ENCODE measurements at regions of chr2 and their contacts with region 1.

Region 1: GRCh38 chr2:64165706-64166105 is 21.5 kb upstream of the PELI1 start:
- DNase-seq: no peak
- H3K4me3 Mint-ChIP-seq: no peak overlapping the region
- H3K27ac Mint-ChIP-seq: no peak overlapping the region
- H3K4me1 Mint-ChIP-seq: peaks cover 3% of the 10 kb centered on the region
- H3K27me3 Mint-ChIP-seq: no peaks in the 10 kb centered on the region

Region 2: DNA sequence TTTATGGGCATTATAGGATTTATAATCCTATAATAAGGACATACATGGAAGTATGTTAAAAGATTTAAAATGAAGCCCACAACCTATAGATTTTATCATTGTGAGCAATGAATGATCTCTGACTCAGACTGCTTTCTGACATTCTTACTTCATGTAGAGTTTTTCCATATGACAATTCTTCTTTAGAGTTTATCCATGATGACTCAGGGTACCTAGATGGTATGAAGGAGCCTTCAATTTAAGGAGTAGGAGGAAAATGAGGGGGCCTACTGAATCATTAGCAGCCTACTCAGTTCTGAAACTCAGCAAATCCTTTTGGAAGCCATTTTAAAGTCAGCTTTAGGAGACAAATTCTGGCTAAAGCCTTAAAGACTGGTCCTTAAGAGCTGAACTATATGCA is 31.9 kb before region 1 on chr2:
- intact Hi-C with region 1: loop called (anchors 1 kb)
- DNase-seq: no peak
- H3K4me3 Mint-ChIP-seq: peak overlapping the region; percentile 60
- H3K27ac Mint-ChIP-seq: peak overlapping the region; percentile 89
- H3K4me1 Mint-ChIP-seq: peaks cover 72% of the 10 kb centered on the region
- H3K27me3 Mint-ChIP-seq: no peaks in the 10 kb centered on the region

Region 3: GRCh38 chr2:64203858-64204632 is 38.3 kb after region 1 on chr2:
- intact Hi-C with region 1: loop called (anchors 1 kb)
- DNase-seq: peak; percentile 84
- H3K4me3 Mint-ChIP-seq: peak overlapping the region; percentile 75
- H3K27ac Mint-ChIP-seq: peak overlapping the region; percentile 75
- H3K4me1 Mint-ChIP-seq: peaks cover 71% of the 10 kb centered on the region
- H3K27me3 Mint-ChIP-seq: no peaks in the 10 kb centered on the region

Region 4: DNA sequence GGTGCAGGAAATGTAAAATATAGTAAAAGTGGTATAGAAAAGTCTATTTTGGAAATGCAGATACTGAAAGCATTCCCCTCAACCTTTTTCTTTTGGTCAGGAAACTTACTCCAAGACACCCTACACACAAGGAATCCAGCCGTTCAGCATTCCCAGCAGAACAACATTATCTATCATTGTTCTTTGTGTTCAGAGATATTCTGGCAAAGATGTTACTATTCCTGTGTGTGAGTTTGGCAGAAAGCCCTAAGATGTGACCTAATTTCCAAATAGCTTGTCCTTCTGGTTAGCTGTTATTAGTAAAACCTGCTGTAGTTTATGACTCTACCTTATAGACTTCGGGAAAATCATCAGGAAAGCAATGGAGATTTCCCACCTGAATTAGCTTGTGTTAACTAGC is 56.6 kb after region 1 on chr2:
- intact Hi-C with region 1: no loop called
- DNase-seq: no peak
- H3K4me3 Mint-ChIP-seq: peak overlapping the region; percentile 63
- H3K27ac Mint-ChIP-seq: peak overlapping the region; percentile 87
- H3K4me1 Mint-ChIP-seq: peaks cover 33% of the 10 kb centered on the region
- H3K27me3 Mint-ChIP-seq: no peaks in the 10 kb centered on the region

Measured in activated CD4-positive, alpha-beta T cell treated with anti-CD3 and anti-CD28 coated beads, Interleukin-2, amount 10 ng/mL, durations not matched to agents 24 days and 14 days (primary cell).